ENCODE measurements at regions of chr1 and their contacts with region 1.

Region 1: GRCh38 chr1:6554031-6554906 is at the start of gene NOL9:
- DNase-seq: peak; percentile 93 to 96
- H3K4me3 ChIP-seq: peak within 1 kb of the TSS; percentile 86 to 91
- H3K27ac ChIP-seq: peak within 1 kb of the TSS; percentile 77 to 86
- H3K4me1 ChIP-seq: peaks cover 7% of the 10 kb centered on the region in 2 donors
- H3K27me3 ChIP-seq: no peaks in the 10 kb centered on the region
- CTCF ChIP-seq: peak; percentile 95 to 99 (median 98)
- POLR2A ChIP-seq: peak; percentile 17 to 54
- total RNA-seq, gene NOL9: 4.7 to 44.8 (median 23.7) TPM

Region 2: DNA sequence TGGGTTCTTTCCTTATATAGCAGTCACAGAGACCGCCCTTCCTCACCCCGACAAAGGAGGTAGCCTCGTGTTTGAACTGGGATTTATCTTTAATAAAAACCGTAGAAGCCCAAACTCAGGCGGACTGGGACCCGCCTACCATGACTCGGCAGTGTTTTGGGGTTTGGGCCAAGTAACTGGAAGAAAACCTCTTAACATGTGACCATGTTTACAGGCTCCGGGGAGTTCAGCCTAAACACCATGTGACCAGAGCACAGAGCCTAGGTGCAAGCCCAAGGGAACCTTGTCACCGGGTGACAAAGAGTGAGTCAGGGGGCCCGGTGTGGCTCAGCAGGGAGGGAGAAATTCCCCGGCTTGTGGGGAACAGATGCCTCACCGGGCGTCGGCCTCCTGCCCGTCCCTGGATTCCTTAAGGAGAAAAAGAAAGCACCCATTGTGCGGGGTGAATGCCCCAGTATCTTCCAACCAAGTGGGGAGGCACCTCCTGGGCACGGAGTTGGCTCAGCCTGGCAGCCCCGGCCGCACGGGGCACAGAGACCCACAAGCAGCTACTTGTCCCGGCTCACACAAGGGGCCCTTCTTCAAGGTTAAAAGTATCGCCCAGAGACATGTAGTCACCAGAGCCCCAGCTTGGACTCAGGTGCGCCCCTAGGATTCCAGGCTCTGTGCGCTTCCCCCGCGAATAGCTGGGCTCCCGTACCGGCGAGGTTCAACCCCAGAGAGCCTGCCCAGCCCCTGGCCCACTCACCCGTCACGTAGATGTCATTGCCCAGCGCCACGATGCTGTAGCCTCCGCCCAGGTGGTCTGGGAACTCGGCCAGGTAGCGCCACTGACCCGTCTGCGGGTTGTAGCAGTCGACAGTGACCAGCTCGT is 47.0 kb after region 1 on chr1:
- intact Hi-C with region 1: loop called (anchors 2 kb)
- DNase-seq: peak; percentile 76 to 87
- H3K4me3 ChIP-seq: peak overlapping the region; percentile 74 to 95
- H3K27ac ChIP-seq: peak overlapping the region; percentile 99 to 100
- H3K4me1 ChIP-seq: peaks cover 15 to 31% of the 10 kb centered on the region in 2 donors
- H3K27me3 ChIP-seq: no peaks in the 10 kb centered on the region
- CTCF ChIP-seq: no peak
- POLR2A ChIP-seq: peak; percentile 49 to 87

Region 3: DNA sequence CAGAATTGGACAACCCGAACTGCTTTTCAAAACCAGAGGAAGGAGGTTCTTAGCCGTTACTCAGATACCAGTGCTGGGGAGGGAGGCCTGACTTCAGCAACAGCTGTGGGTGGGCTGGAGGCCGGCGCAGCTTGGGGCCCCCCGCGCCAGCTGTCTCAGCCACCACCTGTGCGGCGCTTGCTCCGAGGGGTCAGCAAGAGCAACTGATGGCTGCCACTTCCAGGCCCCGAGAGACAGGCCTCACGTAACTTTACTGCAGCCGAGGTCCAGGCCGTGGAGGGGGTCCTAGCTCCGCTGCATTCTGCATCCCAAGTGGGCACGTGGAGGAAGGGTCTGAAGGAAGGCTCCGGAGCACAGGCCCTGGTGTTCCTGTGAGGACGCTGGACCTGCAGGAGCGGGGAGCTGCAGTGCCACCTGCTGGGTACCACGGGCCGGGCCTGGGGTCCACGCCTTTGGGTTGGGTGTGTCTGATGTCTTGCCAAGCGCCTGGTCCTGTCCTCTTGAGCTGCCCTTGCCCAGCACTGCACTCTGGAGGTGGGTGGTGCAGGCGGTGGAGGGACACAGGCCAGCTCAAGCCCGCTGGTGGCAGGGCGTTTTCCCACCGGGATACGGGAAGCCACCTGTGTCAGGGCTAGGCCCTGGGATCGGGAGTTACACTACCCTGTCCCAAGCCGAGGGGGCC is 80.2 kb after region 1 on chr1:
- intact Hi-C with region 1: loop called (anchors 10 kb)
- DNase-seq: peak; percentile 40 to 47
- H3K4me3 ChIP-seq: no peak overlapping the region
- H3K27ac ChIP-seq: no peak overlapping the region
- H3K4me1 ChIP-seq: no peaks in the 10 kb centered on the region
- H3K27me3 ChIP-seq: no peaks in the 10 kb centered on the region
- CTCF ChIP-seq: peak; percentile 24 to 54 (median 32)
- POLR2A ChIP-seq: no peak

Region 4: DNA sequence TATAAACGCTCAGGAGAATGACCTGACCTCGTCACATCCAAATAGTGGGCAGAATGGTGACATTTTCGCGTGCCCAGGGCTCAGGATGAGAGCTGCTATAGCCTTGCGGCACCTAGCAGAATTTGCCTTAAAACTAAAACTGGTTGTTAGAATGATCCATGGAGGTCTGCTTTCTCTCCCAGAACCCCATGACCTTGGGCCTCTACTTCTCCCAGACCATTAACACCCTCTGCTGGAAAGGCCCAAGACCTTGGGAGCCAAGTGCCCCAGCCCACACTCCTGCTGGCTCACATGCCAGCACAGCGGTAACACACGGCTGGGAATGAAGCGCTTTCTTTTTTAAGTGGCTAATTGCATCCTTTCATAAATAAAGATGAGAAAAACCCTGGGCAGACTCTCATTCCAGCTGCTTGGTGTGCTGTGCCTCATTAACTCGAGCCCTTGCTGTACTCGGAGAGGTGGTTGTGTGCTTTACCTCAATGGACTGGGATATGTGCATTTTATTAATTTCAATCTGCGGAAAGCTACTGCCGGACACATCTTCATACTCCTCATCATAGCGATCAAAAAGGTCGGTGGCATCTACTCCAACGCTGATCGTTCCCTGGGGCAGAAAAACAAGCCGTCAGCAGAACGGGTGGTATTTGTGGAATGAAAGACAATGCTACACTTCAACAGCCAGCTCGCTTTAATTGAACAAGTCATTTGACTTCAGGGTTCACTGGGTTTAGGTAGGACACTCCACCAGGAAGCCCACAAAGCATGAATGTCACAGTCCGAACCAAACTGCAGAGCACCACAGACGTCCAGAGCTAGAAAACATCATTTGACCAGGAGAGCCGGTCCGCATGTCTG is 99.4 kb after region 1 on chr1:
- intact Hi-C with region 1: no loop called
- DNase-seq: no peak
- H3K4me3 ChIP-seq: no peak overlapping the region
- H3K27ac ChIP-seq: no peak overlapping the region
- H3K4me1 ChIP-seq: no peaks in the 10 kb centered on the region
- H3K27me3 ChIP-seq: no peaks in the 10 kb centered on the region
- CTCF ChIP-seq: no peak
- POLR2A ChIP-seq: no peak